ENCODE measurements at regions of chr14 and their contacts with region 1.

Region 1: GRCh38 chr14:74860906-74861733 is 14.8 kb downstream of the PROX2 start:
- DNase-seq: no peak
- ATAC-seq: peak; percentile 97
- H3K4me3 ChIP-seq: no peak overlapping the region
- H3K27ac ChIP-seq: no peak overlapping the region
- H3K4me1 ChIP-seq: no peaks in the 10 kb centered on the region
- H3K27me3 ChIP-seq: no peaks in the 10 kb centered on the region
- CTCF ChIP-seq: peak; percentile 82 to 94 (median 88)
- EP300 ChIP-seq: no peak
- POLR2A ChIP-seq: no peak
- RAD21 ChIP-seq: peak; percentile 93

Region 2: DNA sequence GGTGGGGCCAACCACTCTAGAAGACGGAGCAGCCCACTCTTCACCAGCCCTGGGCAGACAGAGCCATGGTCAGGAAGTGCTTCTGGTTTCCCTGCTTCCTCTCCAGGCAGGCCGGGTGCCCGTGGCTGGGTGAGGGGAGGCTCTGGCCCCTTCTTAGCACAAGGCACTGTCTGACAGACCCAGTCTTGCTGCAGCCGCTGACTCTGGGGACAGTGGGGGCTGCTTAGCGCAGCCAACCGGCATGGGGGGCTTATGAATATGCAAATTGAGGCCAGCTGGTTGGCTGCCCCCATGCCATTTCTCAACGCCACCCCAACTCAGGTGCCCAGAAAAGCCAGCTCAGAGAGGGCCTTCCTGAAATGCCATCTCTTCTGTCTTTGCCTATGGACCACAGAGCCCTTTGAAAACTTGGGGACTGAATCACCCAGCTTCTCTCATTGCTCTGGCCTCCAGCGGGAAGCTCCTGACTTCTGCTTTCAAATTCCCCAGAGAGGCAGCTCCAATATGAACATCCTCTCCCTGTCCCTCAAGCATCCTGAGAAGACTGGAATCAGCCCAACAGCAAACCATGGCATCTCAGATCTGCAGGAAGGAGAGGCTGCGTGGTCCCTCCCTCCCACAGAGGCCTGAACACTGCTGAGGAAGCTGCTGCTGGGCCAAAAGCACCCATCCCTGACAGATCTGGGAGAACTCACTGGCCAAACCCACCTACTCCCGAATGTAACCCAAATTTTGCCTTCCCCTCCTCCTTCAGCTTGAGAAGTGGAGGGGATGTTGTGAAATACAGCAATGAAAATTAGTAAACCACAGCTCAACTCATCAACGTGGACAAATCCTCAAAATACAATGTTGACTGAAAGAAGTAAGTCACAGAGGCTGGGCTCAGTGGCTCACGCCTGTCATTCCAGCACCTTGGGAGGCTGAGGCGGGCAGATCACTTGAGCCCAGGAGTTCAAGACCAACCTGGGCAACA is 15.1 kb after region 1 on chr14 and contains the start of gene PROX2:
- CTCF ChIA-PET with region 1: interaction called, 289 read pairs
- POLR2A ChIA-PET with region 1: interaction called, 10 read pairs
- RAD21 ChIA-PET with region 1: interaction called, 13 read pairs
- SMC1A ChIA-PET with region 1: interaction called, 30 read pairs
- in situ Hi-C with region 1: no loop called
- intact Hi-C with region 1: no loop called
- DNase-seq: no peak
- ATAC-seq: peak; percentile 47
- H3K4me3 ChIP-seq: no peak within 1 kb of the TSS
- H3K27ac ChIP-seq: no peak within 1 kb of the TSS
- H3K4me1 ChIP-seq: peaks cover 13% of the 10 kb centered on the region
- H3K27me3 ChIP-seq: no peaks in the 10 kb centered on the region; a peak in 1 of 4 replicates
- CTCF ChIP-seq: no peak
- EP300 ChIP-seq: no peak
- POLR2A ChIP-seq: no peak
- RAD21 ChIP-seq: no peak
- polyA plus RNA-seq, gene PROX2: 0.04 to 0.05 TPM

Region 3: DNA sequence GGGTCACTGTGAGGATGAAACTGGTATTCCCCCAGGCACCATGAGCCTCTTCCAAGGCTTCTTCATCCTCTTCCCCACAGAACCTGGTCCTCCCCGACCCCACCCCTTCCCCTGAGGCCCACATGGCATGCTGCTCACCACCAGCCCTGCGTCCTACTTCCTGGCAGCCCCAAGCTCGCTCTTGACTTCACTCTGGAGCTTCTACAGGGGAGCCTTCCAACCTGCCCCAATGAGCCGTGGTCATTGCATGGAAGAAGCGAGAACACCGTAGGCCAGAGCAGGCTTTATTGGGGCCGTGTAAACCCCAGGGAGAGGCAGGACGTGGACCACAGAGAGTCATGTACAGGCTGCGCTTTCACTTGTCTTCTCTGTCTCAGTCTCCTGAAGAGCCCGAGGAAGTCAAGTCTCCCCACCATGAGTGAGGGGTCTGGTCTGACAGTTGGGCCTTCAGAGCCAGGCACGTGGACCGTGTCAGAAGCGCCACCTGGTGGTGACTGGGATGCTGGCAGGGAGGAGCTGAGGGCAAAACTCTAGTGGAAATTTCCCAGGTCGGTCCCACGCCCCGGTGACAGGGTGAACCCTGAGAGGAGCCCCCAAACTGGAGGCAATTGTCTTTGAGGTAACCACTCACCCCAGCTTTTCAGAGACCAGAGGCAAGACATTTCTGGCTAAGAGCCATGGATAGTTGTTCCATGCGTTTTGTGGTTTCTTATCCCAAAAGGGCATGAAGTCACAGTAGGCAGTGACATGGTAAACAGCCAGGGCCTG is 44.4 kb after region 1 on chr14:
- CTCF ChIA-PET with region 1: interaction called, 552 read pairs
- POLR2A ChIA-PET with region 1: interaction called, 9 read pairs
- RAD21 ChIA-PET with region 1: interaction called, 114 read pairs
- SMC1A ChIA-PET with region 1: interaction called, 165 read pairs
- in situ Hi-C with region 1: no loop called
- intact Hi-C with region 1: loop called (anchors 1 kb)
- DNase-seq: no peak
- ATAC-seq: peak; percentile 87
- H3K4me3 ChIP-seq: no peak overlapping the region
- H3K27ac ChIP-seq: no peak overlapping the region
- H3K4me1 ChIP-seq: peaks cover 4% of the 10 kb centered on the region; the same call in 1 of the 2 replicates
- H3K27me3 ChIP-seq: no peaks in the 10 kb centered on the region
- CTCF ChIP-seq: peak; percentile 88 to 96 (median 94)
- EP300 ChIP-seq: no peak
- POLR2A ChIP-seq: peak; percentile 66; the same call in 1 of the 2 replicates
- RAD21 ChIP-seq: peak; percentile 82

Region 4: DNA sequence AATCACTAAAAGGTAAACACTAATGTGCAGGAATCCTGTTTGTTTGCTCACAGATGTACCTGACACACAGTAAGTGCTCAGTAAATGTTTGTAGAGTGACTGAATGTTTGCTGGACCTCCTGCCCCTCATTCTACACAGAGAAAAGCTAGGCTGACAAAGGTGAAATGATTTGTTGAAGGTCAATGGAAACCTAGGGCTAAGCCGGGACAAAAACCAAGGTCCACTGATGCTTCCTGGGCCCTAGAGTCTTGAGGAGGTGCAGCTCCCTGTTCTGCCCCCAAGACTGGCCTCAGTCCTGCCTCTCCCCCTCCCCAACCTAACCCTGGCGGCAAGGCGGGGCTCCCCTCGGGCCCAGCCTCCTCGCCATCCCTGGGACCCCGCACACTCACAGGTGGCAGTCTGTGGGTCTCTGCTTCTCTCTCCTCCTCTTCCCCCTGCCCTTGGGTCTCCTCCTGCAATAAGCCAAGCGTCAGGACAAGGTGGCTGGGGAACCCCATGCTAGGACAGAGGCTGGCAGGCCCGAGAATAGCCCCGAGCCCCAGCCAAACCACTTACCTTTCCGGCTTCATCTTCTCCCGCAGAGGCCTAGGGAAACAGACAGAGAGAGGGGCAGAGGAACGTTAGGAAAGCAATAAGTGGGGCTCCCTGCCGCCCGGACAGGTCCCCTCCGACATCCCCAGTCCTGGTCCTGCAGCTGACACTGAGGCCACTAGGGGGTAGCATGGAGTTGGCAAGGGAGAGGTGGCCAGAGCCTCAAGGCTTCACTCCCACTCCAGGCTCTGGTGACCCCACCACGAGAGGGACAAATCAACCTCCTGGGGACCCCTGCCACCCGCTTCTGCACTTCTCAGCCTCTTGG is 84.9 kb after region 1 on chr14:
- CTCF ChIA-PET with region 1: interaction called, 11 read pairs
- POLR2A ChIA-PET with region 1: no interaction called
- RAD21 ChIA-PET with region 1: interaction called, 5 read pairs
- SMC1A ChIA-PET with region 1: interaction called, 9 read pairs
- in situ Hi-C with region 1: no loop called
- intact Hi-C with region 1: no loop called
- DNase-seq: no peak
- ATAC-seq: peak; percentile 84
- H3K4me3 ChIP-seq: no peak overlapping the region
- H3K27ac ChIP-seq: no peak overlapping the region
- H3K4me1 ChIP-seq: peaks cover 23% of the 10 kb centered on the region
- H3K27me3 ChIP-seq: no peaks in the 10 kb centered on the region
- CTCF ChIP-seq: peak; percentile 90 to 96 (median 94)
- EP300 ChIP-seq: no peak
- POLR2A ChIP-seq: no peak
- RAD21 ChIP-seq: peak; percentile 87

Region 5: DNA sequence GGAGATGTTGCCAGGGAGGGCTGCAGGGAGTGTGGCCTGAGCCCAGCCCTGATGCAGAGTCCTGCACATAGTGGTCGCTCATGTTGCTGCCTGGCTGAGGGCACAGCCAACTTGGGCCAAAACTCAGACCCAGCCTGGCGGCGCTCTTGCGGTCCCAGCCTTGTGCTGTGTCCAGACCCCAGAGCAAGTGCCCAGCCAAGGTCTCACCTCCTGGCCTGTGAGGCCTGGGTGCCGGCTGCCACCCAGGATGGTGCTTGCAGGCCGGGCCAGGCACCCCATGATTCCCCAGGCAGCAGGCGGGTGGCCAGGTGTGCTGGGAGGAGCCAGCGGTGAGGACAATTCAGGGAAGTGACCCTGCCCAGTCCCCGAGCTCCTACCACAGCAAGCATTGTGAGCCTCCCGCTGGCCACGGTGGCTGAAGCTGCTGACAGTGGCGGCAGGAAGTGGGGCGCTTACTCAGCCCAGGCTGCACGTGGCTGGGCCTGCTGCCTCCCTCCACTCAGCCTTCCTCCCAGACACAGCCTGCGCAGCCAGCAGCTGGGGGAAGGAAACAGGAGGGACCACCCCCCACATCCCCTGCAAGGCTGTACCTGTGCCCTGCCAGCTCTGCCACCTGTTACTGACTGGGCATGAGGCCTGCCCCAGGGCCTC is 112.0 kb after region 1 on chr14:
- CTCF ChIA-PET with region 1: no interaction called
- POLR2A ChIA-PET with region 1: no interaction called
- RAD21 ChIA-PET with region 1: no interaction called
- SMC1A ChIA-PET with region 1: no interaction called
- in situ Hi-C with region 1: no loop called
- intact Hi-C with region 1: no loop called
- DNase-seq: no peak
- ATAC-seq: peak; percentile 52
- H3K4me3 ChIP-seq: no peak overlapping the region
- H3K27ac ChIP-seq: no peak overlapping the region
- H3K4me1 ChIP-seq: no peaks in the 10 kb centered on the region
- H3K27me3 ChIP-seq: no peaks in the 10 kb centered on the region; a peak in 1 of 4 replicates
- CTCF ChIP-seq: no peak
- EP300 ChIP-seq: no peak
- POLR2A ChIP-seq: no peak
- RAD21 ChIP-seq: no peak

Region 6: DNA sequence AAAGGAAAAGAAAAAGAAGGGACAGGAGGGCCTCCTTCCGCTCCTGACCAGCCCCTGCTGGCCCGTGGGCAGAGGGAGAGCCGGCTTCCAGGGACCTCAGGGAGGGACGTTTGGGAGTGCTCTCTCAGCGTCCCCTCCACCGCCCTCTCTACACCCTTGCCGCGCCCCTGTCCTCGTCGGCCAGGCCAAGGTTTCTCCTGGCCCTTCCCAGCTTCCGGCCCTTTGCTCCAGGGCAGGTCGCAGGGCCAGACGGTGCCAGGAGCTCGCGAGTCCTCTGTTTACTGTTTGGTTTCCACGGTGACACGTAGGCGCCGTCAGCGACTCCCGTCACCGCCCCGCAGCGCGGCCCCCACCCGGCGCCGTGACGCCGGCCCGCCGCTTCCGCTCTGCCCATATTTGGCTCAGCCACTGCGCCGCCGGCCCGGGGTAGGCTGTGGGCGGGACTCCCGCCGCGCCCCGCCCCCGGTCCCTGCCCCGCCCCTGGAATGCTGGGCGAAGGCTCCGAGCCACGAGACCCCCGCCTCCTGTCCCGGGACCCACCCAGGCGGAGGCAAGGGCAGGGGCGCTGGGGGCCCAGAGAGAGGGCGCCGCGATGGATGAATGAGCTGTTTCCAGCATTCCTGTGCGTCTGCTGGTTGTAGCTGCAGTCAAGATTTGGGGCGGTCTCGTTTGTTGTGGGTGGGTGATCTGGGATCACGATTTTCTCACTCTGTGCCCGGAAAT is 433.0 kb after region 1 on chr14:
- CTCF ChIA-PET with region 1: interaction called, 10 read pairs
- POLR2A ChIA-PET with region 1: no interaction called
- RAD21 ChIA-PET with region 1: no interaction called
- SMC1A ChIA-PET with region 1: no interaction called
- in situ Hi-C with region 1: no loop called
- intact Hi-C with region 1: loop called (anchors 10 kb)
- DNase-seq: no peak
- ATAC-seq: peak; percentile 99
- H3K4me3 ChIP-seq: peak overlapping the region; percentile 72
- H3K27ac ChIP-seq: no peak overlapping the region
- H3K4me1 ChIP-seq: peaks cover 17% of the 10 kb centered on the region
- H3K27me3 ChIP-seq: no peaks in the 10 kb centered on the region; a peak in 1 of 4 replicates
- CTCF ChIP-seq: no peak
- EP300 ChIP-seq: peak in 1 of 2 experiments; percentile 72; a peak in 2 of 4 replicates
- POLR2A ChIP-seq: no peak
- RAD21 ChIP-seq: no peak

Measured in GM12878 (cell line).